ENCODE measurements at regions of chr5 and their contacts with region 1.

Region 1: DNA sequence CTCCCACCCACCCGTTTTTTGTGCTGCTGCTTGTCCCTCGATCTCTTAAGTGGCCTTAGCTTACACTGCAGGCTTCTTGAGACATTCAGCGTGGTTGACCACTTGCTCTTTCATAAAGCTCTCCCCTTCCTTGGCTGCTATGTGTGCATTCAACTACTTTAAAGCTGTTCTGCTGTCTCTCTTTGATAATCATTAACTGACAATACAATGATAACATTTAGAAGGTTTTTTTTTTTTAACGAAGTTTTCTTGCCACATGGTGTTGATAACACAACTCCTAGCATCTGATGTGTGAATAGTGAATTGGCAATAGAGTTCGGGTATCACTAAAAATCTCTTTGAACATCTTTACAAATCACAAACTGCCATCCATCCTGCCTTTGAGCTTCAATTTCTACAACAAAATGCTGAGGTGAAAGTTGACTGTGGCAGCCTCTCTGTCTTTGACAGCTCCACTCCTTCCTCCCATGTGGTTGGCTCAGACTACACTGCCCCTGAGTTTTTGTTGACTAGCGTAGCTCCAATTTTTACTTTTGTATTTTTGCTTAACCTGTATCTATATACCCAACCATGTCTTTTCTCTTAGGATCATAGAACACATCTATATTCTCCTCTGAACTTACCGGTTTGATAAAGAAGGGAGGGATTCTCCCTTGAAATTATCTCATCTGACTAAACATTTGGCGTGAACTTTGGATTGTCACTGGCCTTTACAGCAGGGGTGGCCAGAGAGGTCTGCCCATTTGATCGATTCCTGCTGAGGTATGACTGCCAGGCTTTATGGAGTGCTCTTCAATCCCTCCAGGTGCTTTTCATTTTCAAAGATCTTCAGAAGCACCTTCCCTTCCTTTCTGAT is 409.4 kb upstream of the CD180 start:
- DNase-seq: peak; percentile 92
- ATAC-seq: peak; percentile 96
- H3K4me3 ChIP-seq: peak overlapping the region; percentile 4 to 54 (median 46); a peak in 5 of 6 replicates
- H3K27ac ChIP-seq: peak overlapping the region; percentile 93
- H3K4me1 ChIP-seq: peaks cover 50% of the 10 kb centered on the region
- H3K27me3 ChIP-seq: no peaks in the 10 kb centered on the region
- CTCF ChIP-seq: no peak
- EP300 ChIP-seq: peak in 1 of 2 experiments; percentile 78; a peak in 2 of 4 replicates
- POLR2A ChIP-seq: peak; percentile 24 to 57; a peak in 2 of 4 replicates
- RAD21 ChIP-seq: no peak

Region 2: DNA sequence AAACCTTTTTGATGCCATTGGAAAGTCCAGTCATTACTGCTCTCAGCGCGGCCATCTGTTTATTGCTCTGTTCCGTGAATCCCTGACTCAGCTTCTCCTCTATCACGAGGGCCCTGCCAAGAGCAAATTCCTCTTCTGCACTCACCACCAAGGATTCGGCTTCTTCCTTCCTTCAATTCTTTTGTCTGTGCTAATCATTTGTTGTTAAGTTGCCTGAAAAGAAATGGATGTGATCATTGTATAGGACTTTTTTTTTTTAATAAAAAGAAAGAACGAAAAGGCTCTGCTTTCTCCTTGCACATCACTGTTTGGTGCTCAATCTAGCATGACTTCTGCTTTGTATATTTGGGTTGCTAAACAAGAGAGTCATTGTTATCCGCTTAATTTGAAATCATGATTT is 480.9 kb after region 1 on chr5:
- CTCF ChIA-PET with region 1: no interaction called
- POLR2A ChIA-PET with region 1: no interaction called
- in situ Hi-C with region 1: no loop called
- intact Hi-C with region 1: loop called (anchors 2 kb)
- DNase-seq: no peak
- ATAC-seq: no peak
- H3K4me3 ChIP-seq: no peak overlapping the region
- H3K27ac ChIP-seq: no peak overlapping the region
- H3K4me1 ChIP-seq: no peaks in the 10 kb centered on the region
- H3K27me3 ChIP-seq: no peaks in the 10 kb centered on the region; a peak in 2 of 5 replicates
- CTCF ChIP-seq: no peak
- EP300 ChIP-seq: no peak
- POLR2A ChIP-seq: no peak
- RAD21 ChIP-seq: no peak

Region 3: DNA sequence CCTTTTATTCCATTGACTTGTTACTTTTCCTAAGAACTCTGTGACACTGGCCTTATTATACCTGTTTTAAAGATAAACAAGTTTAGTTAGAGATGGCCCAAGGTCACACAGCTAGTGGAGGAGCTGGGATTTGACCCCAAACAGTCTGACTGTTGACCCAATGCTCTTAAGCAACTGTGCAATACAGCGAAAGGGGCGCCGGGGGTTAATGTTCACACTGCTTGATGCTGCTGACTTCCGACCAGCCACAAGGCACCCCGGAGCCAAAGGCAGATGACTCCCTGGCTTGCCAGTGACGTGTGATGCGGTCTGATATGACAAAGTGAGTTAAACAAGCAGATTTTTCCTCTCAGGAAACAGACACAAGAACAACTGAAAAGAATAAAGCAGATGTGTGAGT is 633.5 kb after region 1 on chr5:
- CTCF ChIA-PET with region 1: no interaction called
- POLR2A ChIA-PET with region 1: interaction called, 8 read pairs
- in situ Hi-C with region 1: no loop called
- intact Hi-C with region 1: loop called (anchors 5 kb)
- DNase-seq: peak; percentile 94
- ATAC-seq: peak; percentile 100
- H3K4me3 ChIP-seq: peak overlapping the region in 2 of 3 experiments; percentile 37 to 50; a peak in 5 of 6 replicates
- H3K27ac ChIP-seq: peak overlapping the region; percentile 72
- H3K4me1 ChIP-seq: peaks cover 67% of the 10 kb centered on the region
- H3K27me3 ChIP-seq: no peaks in the 10 kb centered on the region
- CTCF ChIP-seq: 0 out of 2 replicates have a peak, but pooled peaks have one; percentile 18
- EP300 ChIP-seq: peak in 1 of 2 experiments; percentile 93; a peak in 3 of 4 replicates
- POLR2A ChIP-seq: no peak
- RAD21 ChIP-seq: no peak